KBM-7 (cell line): ENCODE measurements at regions of chr6 and their contacts with region 1.

Region 1: DNA sequence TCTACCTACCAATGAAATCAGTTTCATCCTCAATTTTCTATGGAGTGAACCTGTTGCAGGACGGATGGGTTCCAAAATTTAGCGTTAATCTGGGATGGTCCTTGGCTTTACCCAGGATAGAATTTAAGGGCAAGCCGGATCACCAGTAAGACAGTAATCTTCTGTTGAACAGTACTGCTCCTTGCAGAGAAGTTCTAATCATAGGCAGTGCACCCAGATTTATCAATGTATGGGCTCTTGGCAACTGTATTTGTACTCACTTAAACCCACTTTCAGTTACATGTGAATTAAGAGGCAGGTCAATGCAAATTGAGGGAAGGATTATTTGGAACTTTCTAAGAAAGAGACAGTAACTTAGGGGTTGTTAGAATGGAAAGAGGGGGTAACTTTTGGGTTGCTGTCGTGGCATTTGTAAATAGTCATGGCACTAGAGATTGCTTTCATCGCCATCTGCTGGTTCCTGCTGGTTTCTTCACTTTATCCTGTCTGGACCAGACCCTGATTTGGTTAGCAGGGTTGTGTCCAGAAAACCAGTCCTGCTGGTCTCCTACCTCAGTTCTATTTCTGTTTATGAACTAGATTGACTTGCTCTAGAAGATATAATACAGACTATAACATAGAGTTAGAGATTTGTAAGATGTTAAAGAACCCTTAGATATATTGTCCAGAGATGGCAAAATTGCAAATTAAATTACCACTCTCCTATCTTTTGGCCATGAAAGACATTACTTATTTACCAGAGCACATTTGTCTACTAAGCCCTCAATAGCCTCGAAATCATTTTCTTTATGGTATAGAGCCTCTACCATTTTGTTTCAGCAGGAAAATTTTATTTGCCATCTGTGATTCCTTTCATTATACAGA is 646.3 kb downstream of the UTRN start:
- DNase-seq: peak; percentile 48

Region 2: GRCh38 chr6:144582939-144583613 is 348.3 kb before region 1 on chr6:
- in situ Hi-C with region 1: loop called (anchors 25 kb)
- DNase-seq: peak; percentile 97

Region 3: DNA sequence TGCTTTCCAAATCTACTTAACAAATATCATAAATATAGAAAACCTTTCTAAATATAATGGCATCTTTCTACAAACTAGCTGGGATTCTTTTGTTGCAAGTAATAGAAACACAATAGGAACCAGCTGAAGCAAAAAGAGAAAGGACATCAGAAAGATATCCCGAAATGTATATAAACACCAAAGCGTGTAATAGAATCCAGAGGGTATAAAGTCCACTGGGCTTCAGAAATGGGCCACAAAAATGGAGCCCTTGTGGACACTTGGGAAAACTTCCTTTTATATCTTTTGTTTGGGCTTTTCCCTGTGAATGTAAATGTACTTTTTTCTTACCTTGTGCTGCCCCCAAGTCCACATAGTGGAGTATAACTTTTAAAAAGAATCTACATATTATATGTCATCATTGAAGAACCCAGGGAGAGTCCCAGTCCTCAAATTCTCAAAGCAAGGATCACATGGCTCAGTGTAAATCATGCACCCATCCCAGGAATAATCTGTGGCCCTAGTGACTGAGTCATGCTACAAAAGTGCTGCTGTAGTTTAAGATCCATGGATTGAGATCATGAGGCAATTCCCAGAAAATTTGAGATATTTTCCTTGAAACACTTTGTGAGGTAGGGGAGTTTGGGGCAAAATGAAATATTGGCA is 346.9 kb after region 1 on chr6:
- in situ Hi-C with region 1: no loop called
- DNase-seq: no peak